ENCODE measurements at regions of chr6 and their contacts with region 1.

Region 1: DNA sequence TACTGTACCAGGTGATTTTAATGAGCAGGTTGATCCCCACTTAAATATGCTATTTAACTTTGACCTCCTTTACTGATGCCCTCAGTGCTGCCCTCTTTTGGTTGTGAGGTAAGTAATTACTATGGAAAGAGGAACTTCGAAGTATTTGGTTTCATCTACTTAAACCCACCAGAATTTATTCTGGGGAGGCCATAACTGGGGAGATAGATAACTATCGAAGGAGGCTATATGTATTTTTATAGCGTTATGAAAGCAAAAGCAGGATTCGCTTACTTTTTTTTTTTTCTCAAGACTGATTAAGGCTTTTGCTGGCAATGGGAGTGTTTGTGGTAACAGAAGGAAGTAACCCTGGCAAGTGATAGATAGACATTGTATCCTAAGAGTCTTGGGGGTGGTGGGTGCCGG is 168.9 kb upstream of the CENPW start:
- H3K4me3 ChIP-seq: no peak overlapping the region
- H3K27ac ChIP-seq: no peak overlapping the region
- H3K4me1 ChIP-seq: no peaks in the 10 kb centered on the region
- CTCF ChIP-seq: no peak

Region 2: DNA sequence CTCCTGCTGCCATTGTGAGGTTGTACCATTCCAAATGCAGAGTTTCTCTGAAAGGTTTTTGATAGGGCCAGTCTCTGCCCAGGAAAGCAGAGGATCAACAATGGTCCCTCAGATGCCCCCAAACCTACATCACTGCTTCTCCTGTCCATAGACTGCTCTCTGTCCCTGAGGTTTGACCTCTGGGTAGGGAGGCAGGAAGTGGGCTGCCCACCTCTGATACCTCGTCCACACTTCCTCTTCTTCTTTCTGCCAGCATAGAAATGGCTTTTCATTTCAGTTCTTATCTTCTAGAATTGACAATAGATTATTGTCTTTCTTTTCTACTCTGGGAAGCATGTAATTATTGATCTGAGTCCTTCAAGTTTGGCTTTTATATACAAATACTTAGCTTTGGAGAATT is 14.0 kb before region 1 on chr6:
- CTCF ChIA-PET with region 1: interaction called, 10 read pairs
- POLR2A ChIA-PET with region 1: interaction called, 3 read pairs
- H3K4me3 ChIP-seq: no peak overlapping the region
- H3K27ac ChIP-seq: no peak overlapping the region
- H3K4me1 ChIP-seq: no peaks in the 10 kb centered on the region
- CTCF ChIP-seq: no peak

Region 3: DNA sequence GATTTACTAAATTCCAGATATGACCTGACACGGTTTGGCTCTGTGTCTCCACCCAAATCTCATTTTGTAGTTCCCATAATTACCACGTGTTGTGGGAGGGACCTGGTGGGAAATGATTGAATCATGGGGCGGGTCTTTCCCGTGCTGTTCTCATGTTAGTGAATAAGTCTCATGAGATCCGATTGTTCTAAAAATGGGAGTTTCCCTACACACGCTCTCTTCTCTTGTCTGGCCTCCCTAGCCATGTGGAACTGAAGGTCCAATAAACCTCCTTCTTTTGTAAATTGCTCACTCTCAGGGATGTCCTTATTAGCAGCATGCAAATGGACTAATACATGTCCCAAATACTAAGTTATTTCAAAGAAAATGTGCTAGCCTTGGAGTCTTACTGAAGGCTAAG is 290.1 kb after region 1 on chr6:
- CTCF ChIA-PET with region 1: no interaction called
- POLR2A ChIA-PET with region 1: no interaction called
- H3K4me3 ChIP-seq: no peak overlapping the region
- H3K27ac ChIP-seq: no peak overlapping the region
- H3K4me1 ChIP-seq: no peaks in the 10 kb centered on the region
- CTCF ChIP-seq: no peak

Measured in HEK293 (cell line).